ENCODE measurements at regions of chr2 and their contacts with region 1.

Region 1: DNA sequence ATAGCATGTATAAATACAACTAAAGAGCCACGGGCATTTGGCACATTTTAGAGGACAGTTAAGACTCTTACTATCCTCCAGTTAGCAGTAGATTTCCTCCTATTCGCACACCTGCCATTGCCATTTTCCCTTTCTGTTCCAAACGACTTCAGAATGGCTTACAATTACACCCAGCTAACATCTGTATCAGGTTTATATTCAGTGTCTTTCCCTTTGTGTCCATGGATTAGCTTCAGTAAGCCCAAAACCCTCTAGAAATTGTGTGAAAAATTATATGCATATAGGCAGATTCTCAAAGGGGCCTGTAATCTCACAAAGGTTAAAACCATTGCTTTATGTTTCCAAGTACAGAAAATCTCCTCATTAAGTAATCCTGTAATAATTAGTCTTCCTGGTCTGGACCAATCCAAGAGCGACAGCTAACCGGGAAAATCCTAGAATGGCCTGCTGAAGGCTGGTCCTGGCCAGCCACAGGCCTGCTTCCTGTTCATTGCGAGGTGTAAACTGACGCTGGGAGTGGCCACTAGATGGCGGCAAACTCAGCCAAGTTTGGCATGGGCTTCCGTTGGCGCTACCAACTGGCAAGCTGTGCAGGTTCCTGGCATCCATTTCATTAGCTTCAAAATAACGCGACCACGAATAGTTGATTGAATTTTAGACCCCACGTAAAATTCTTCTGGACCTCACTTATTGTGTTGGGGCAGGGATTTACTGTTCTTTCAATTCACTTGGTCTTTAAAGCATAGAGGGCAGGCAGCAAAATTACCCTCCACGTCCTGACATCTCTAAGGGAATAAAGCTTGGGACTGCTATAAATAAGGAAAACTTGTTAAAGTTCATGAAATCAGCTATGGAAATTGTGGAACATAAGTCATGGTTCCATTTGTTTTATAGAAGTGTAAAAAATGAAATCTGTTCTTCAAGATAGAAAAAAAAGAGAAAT is 17.1 kb downstream of the ARHGAP25 start:
- DNase-seq: peak; percentile 77 to 98 (median 93)

Region 2: GRCh38 chr2:68828887-68829708 is 77.4 kb after region 1 on chr2:
- intact Hi-C with region 1: loop called (anchors 5 kb)
- DNase-seq: peak; percentile 65 to 97 (median 86)

Region 3: GRCh38 chr2:68909793-68910674 is 158.4 kb after region 1 on chr2:
- intact Hi-C with region 1: loop called (anchors 1 kb)
- DNase-seq: peak in 6 of 10 donors; percentile 43 to 90 (median 64)

Region 4: DNA sequence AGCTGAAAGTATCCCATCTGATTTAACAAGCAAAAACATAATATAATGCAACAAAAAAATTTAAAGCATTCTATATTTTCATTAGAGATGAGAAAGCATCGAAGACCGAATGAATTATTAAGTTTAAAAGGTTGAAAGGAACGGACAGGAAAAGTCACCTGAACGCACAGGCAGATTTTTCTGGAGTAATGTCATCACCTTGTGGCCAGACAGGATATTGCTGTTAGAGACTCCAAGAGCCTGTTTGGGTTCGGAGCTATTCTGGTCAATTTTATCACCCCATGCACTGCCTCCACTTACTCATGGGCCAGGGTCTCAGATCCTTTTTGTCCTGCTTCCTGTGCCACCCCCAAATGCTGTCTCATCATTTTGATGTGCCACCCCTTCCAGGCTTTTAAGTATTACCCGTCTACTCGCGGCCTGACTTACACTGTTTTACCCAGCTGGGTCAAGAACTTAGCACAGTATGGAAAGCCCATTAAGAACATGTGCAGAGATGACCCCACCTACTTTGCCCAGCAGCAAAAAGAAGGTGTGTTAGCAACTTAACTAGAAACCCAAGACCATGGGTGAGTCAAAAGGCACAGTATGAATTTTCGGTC is 173.7 kb after region 1 on chr2:
- intact Hi-C with region 1: loop called (anchors 1 kb)
- DNase-seq: peak in 1 of 10 donors; percentile 23